ENCODE measurements at regions of chr5 and their contacts with region 1.

Region 1: GRCh38 chr5:142324871-142325724 is at the start of gene SPRY4:
- DNase-seq: peak; percentile 51 to 86 (median 74)
- ATAC-seq: peak; percentile 81
- H3K4me3 ChIP-seq: peak within 1 kb of the TSS; percentile 61
- H3K4me3 Mint-ChIP-seq: peak within 1 kb of the TSS; percentile 87
- H3K27ac ChIP-seq: no peak within 1 kb of the TSS
- H3K27ac Mint-ChIP-seq: no peak within 1 kb of the TSS
- H3K4me1 ChIP-seq: peaks cover 33% of the 10 kb centered on the region
- H3K4me1 Mint-ChIP-seq: peaks cover 49% of the 10 kb centered on the region
- H3K27me3 ChIP-seq: peaks cover 54 to 58% of the 10 kb centered on the region in 2 experiments
- H3K27me3 Mint-ChIP-seq: peaks cover 81% of the 10 kb centered on the region
- CTCF ChIP-seq: no peak
- total RNA-seq, gene SPRY4: 0.16 to 0.34 TPM

Region 2: DNA sequence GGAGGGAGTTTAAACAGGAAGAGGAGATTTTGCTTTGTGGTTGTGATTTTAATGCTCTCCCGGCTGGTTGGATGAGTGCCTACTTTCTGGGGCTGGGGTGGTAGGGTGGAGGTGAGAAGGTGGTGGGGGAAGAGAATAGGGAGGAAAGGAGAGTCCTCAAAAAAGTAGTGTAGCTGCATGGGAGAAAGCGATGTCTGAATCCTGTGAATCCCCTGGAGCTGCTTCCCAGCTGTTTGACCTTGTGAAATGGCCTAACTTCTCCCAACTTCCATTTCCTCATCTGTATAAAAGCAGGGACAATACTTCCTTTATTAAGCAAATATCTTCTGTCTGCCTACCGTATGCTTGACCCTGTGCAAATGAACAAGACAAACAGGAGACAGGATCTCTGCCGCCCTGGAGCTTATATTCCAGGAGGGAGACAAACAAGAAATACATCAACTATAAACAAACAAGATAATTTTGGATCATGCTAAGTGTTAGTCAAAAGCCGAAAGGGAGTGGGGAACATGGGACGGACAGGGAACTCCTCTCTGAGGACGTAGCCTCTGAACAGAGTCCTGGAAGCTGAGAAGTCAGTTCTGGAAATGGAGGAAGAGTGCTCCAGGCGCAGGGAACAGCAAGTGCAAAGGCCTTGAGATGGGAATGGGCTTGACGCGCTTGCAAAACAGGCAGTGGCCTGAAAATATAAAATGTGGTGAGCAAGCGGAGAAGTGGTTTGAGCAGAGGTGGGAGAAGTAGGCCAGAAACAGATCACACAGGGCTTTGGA is 103.8 kb before region 1 on chr5:
- CTCF ChIA-PET with region 1: no interaction called
- POLR2A ChIA-PET with region 1: interaction called, 10 read pairs
- intact Hi-C with region 1: no loop called
- DNase-seq: no peak
- ATAC-seq: no peak
- H3K4me3 ChIP-seq: no peak overlapping the region
- H3K4me3 Mint-ChIP-seq: no peak overlapping the region
- H3K27ac ChIP-seq: no peak overlapping the region
- H3K27ac Mint-ChIP-seq: no peak overlapping the region
- H3K4me1 ChIP-seq: peaks cover 29% of the 10 kb centered on the region
- H3K4me1 Mint-ChIP-seq: peaks cover 42% of the 10 kb centered on the region
- H3K27me3 ChIP-seq: no peaks in the 10 kb centered on the region
- H3K27me3 Mint-ChIP-seq: no peaks in the 10 kb centered on the region
- CTCF ChIP-seq: no peak

Region 3: DNA sequence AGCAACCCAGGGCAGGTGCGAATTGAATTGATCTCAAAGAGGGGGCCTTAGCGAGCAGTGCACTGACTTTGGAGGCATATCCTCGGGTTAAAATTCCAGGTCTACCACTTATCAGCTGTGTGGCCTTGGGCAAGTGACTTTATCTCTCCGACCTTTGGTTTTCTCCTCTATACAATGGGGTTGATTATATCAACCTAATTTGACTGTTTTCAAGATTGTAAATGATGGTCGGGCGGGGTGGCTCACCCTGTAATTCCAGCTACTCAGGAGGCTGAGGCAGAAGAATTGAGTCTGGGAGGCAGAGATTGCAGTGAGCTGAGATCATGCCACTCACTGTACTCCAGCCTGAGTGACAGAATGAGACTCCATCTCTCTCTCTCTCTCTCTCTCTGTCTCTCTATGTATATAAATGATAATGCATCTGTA is 19.0 kb before region 1 on chr5:
- CTCF ChIA-PET with region 1: no interaction called
- POLR2A ChIA-PET with region 1: no interaction called
- intact Hi-C with region 1: no loop called
- DNase-seq: no peak
- ATAC-seq: no peak
- H3K4me3 ChIP-seq: no peak overlapping the region
- H3K4me3 Mint-ChIP-seq: no peak overlapping the region
- H3K27ac ChIP-seq: no peak overlapping the region
- H3K27ac Mint-ChIP-seq: no peak overlapping the region
- H3K4me1 ChIP-seq: peaks cover 4% of the 10 kb centered on the region
- H3K4me1 Mint-ChIP-seq: peaks cover 8% of the 10 kb centered on the region
- H3K27me3 ChIP-seq: no peaks in the 10 kb centered on the region
- H3K27me3 Mint-ChIP-seq: no peaks in the 10 kb centered on the region
- CTCF ChIP-seq: no peak

Region 4: DNA sequence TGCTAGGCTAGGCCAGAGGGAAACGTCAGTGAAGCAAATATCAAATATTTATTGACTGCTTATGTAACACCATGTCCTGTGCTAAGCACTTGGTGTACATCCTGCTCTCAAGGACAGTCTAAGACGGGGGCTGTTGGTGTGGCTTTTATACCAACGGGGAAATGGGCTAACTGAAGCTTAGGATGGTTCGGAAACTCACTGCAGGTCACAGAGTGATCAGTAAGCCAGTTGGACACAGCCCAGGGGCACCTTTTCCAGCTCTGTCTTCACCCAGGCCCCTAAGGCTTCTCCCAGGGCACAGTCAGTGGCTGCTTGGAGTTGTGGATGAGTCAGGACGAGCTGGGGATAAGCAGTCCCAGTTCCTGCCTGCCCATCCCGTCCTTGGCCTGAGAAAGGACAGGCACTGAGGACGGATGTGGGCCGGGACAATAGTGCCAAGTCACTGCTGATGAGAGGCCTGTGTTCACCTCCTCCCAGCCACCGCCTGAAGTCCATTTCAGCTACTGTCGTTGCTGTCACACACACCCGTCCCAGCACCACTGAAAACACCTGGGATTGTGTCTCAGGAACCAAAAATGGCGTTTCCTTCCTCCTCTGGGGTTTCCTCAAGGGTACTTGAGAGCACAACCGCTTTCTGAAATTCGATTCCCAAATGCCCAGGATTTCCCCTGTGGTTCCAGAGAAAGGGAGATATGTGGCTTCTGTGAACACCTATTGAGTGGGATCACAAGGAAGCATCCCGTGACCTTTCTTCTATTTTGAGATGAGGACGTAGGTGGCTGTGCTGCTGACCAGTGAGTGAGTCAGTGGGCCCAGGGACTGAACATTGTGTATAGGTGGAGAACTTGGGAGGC is 17.3 kb after region 1 on chr5:
- CTCF ChIA-PET with region 1: no interaction called
- POLR2A ChIA-PET with region 1: no interaction called
- intact Hi-C with region 1: loop called in 1 of 2 experiments (anchors 2 kb)
- DNase-seq: no peak
- ATAC-seq: no peak
- H3K4me3 ChIP-seq: no peak overlapping the region
- H3K4me3 Mint-ChIP-seq: no peak overlapping the region
- H3K27ac ChIP-seq: no peak overlapping the region
- H3K27ac Mint-ChIP-seq: no peak overlapping the region
- H3K4me1 ChIP-seq: no peaks in the 10 kb centered on the region
- H3K4me1 Mint-ChIP-seq: no peaks in the 10 kb centered on the region
- H3K27me3 ChIP-seq: peaks cover 0 to 2% of the 10 kb centered on the region in 2 experiments
- H3K27me3 Mint-ChIP-seq: no peaks in the 10 kb centered on the region
- CTCF ChIP-seq: no peak

Region 5: GRCh38 chr5:142426129-142427014 is 101.3 kb after region 1 on chr5:
- CTCF ChIA-PET with region 1: no interaction called
- POLR2A ChIA-PET with region 1: interaction called, 4 read pairs
- intact Hi-C with region 1: loop called in 1 of 2 experiments (anchors 10 kb)
- DNase-seq: peak in 12 of 14 experiments; percentile 7 to 83 (median 28)
- ATAC-seq: peak; percentile 83
- H3K4me3 ChIP-seq: no peak overlapping the region
- H3K4me3 Mint-ChIP-seq: peak overlapping the region; percentile 14
- H3K27ac ChIP-seq: no peak overlapping the region
- H3K27ac Mint-ChIP-seq: peak overlapping the region; percentile 9
- H3K4me1 ChIP-seq: peaks cover 52% of the 10 kb centered on the region
- H3K4me1 Mint-ChIP-seq: peaks cover 59% of the 10 kb centered on the region
- H3K27me3 ChIP-seq: no peaks in the 10 kb centered on the region
- H3K27me3 Mint-ChIP-seq: no peaks in the 10 kb centered on the region
- CTCF ChIP-seq: no peak

Region 6: GRCh38 chr5:142671801-142672200 is 346.7 kb after region 1 on chr5:
- CTCF ChIA-PET with region 1: no interaction called
- POLR2A ChIA-PET with region 1: no interaction called
- intact Hi-C with region 1: no loop called
- DNase-seq: no peak
- ATAC-seq: no peak
- H3K4me3 ChIP-seq: no peak overlapping the region
- H3K4me3 Mint-ChIP-seq: no peak overlapping the region
- H3K27ac ChIP-seq: no peak overlapping the region
- H3K27ac Mint-ChIP-seq: no peak overlapping the region
- H3K4me1 ChIP-seq: no peaks in the 10 kb centered on the region
- H3K4me1 Mint-ChIP-seq: no peaks in the 10 kb centered on the region
- H3K27me3 ChIP-seq: no peaks in the 10 kb centered on the region
- H3K27me3 Mint-ChIP-seq: no peaks in the 10 kb centered on the region
- CTCF ChIP-seq: no peak